Sigmoid colon (tissue), 7 donors: ENCODE measurements at regions of chr4 and their contacts with region 1.

Region 1: GRCh38 chr4:6386091-6386490 is 86.3 kb downstream of the PPP2R2C start:
- DNase-seq: no peak
- H3K4me3 ChIP-seq: no peak overlapping the region
- H3K27ac ChIP-seq: no peak overlapping the region
- H3K4me1 ChIP-seq: no peaks in the 10 kb centered on the region
- H3K27me3 ChIP-seq: peaks cover 2 to 47% (median 15%) of the 10 kb centered on the region in 3 donors
- CTCF ChIP-seq: no peak
- EP300 ChIP-seq: no peak
- POLR2A ChIP-seq: no peak

Region 2: GRCh38 chr4:6076391-6076790 is 309.7 kb before region 1 on chr4:
- intact Hi-C with region 1: no loop called
- DNase-seq: no peak
- H3K4me3 ChIP-seq: no peak overlapping the region
- H3K27ac ChIP-seq: no peak overlapping the region
- H3K4me1 ChIP-seq: no peaks in the 10 kb centered on the region
- H3K27me3 ChIP-seq: peaks cover 0 to 4% (median 0%) of the 10 kb centered on the region in 3 donors
- CTCF ChIP-seq: no peak
- EP300 ChIP-seq: no peak
- POLR2A ChIP-seq: no peak

Region 3: GRCh38 chr4:6446538-6447451 is 60.7 kb after region 1 on chr4:
- intact Hi-C with region 1: loop called (anchors 10 kb)
- DNase-seq: no peak
- H3K4me3 ChIP-seq: no peak overlapping the region
- H3K27ac ChIP-seq: no peak overlapping the region
- H3K4me1 ChIP-seq: peaks cover 0 to 16% (median 14%) of the 10 kb centered on the region in 4 donors
- H3K27me3 ChIP-seq: peaks cover 0 to 34% (median 3%) of the 10 kb centered on the region in 3 donors
- CTCF ChIP-seq: no peak
- EP300 ChIP-seq: no peak
- POLR2A ChIP-seq: no peak